ENCODE measurements at regions of chr20 and their contacts with region 1.

Region 1: GRCh38 chr20:63537525-63538203 is 488 bp upstream of the PTK6 start:
- DNase-seq: peak; percentile 99
- H3K4me3 Mint-ChIP-seq: peak overlapping the region; percentile 66
- H3K27ac Mint-ChIP-seq: peak overlapping the region; percentile 80
- H3K4me1 Mint-ChIP-seq: peaks cover 15% of the 10 kb centered on the region
- H3K27me3 Mint-ChIP-seq: no peaks in the 10 kb centered on the region

Region 2: DNA sequence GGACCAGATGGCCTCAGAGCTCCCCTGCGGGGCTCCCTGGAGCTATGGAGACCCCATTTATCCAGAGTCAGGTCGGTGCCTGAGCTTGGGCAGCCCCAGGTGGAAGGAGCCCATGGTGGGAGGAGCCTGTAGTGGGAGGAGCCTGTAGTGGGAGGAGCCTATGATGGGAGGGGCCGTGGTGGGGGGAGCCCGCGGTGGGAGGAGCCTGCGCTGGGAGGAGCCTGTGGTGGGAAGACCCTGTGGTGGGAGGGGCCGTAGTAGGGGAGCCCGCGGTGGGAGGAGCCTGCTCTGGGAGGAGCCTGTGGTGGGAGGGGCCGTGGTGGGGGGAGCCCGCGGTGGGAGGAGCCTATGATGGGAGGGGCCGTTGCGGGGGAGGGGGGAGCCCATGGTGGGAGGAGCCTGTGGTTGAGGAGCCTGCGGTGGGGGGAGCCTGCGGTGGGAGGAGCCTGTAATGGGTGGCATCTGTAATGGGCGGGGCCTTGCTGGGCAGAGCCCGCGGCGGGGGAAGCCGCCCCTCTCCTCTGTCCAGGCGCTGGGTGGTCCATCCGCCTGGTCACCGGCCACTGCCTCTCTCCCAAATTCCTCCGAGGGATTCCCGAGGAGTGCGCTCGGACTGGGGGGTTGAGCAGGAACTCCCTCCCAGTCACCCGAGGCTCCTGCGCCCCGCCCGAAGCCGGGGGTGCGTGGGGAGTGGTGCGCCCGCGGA is 15.7 kb after region 1 on chr20:
- CTCF ChIA-PET with region 1: interaction called, 10 read pairs
- POLR2A ChIA-PET with region 1: no interaction called
- intact Hi-C with region 1: loop called (anchors 1 kb)
- DNase-seq: peak; percentile 94
- H3K4me3 Mint-ChIP-seq: peak overlapping the region; percentile 39
- H3K27ac Mint-ChIP-seq: no peak overlapping the region
- H3K4me1 Mint-ChIP-seq: peaks cover 11% of the 10 kb centered on the region
- H3K27me3 Mint-ChIP-seq: peaks cover 6% of the 10 kb centered on the region

Region 3: DNA sequence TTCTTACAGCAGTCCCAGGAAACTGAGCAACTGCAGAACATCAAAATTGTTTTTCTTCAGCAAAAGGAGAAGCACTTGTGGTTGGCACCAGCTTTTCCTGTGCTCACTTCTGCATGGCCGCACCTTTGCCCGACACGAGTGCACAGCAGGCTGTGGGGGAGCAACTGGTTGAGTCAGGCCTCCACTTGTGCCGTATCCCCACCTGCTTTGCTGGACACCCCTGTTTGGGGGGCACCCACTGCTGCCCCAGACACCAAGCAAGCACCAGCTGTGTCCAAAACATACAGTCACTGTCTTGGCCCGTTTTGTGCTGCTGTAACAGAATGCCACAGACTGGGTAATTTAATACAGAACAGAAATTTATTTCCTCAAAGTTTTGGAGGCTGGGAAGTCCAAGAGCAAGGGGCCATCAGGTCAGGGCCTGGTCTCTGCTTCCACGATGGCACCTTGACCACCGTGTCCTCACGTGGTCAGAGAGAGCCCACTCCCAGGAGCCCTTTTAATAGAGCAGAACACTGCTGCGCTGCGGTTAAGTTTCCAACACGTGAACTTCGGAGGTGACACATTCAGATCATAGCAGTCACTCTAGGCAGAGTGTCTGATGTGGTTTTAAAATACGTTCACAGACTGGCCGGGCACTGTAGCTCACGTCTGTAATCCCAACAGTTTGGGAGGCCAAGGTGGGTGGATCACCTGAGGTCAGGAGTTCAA is 97.9 kb after region 1 on chr20:
- CTCF ChIA-PET with region 1: interaction called, 6 read pairs
- POLR2A ChIA-PET with region 1: interaction called, 3 read pairs
- intact Hi-C with region 1: loop called (anchors 5 kb)
- DNase-seq: peak; percentile 90
- H3K4me3 Mint-ChIP-seq: peak overlapping the region; percentile 60
- H3K27ac Mint-ChIP-seq: peak overlapping the region; percentile 93
- H3K4me1 Mint-ChIP-seq: peaks cover 55% of the 10 kb centered on the region
- H3K27me3 Mint-ChIP-seq: no peaks in the 10 kb centered on the region

Region 4: GRCh38 chr20:63707549-63708300 is 170.1 kb after region 1 on chr20 and contains the starts of genes ARFRP1 and ZGPAT:
- CTCF ChIA-PET with region 1: interaction called, 13 read pairs
- POLR2A ChIA-PET with region 1: no interaction called
- intact Hi-C with region 1: no loop called
- DNase-seq: peak; percentile 93
- H3K4me3 Mint-ChIP-seq: peak within 1 kb of the TSS; percentile 93
- H3K27ac Mint-ChIP-seq: peak within 1 kb of the TSS; percentile 94
- H3K4me1 Mint-ChIP-seq: peaks cover 44% of the 10 kb centered on the region
- H3K27me3 Mint-ChIP-seq: no peaks in the 10 kb centered on the region
- total RNA-seq, gene ARFRP1: 54.6 to 58.4 TPM
- total RNA-seq, gene ZGPAT: 28.7 to 29.9 TPM

Region 5: GRCh38 chr20:63864847-63865640 is 327.4 kb after region 1 on chr20 and contains the start of gene TPD52L2:
- CTCF ChIA-PET with region 1: interaction called, 19 read pairs
- POLR2A ChIA-PET with region 1: interaction called, 8 read pairs
- intact Hi-C with region 1: loop called (anchors 1 kb)
- DNase-seq: peak; percentile 99
- H3K4me3 Mint-ChIP-seq: peak within 1 kb of the TSS; percentile 78
- H3K27ac Mint-ChIP-seq: peak within 1 kb of the TSS; percentile 87
- H3K4me1 Mint-ChIP-seq: peaks cover 32% of the 10 kb centered on the region
- H3K27me3 Mint-ChIP-seq: no peaks in the 10 kb centered on the region
- total RNA-seq, gene TPD52L2: 67.8 to 70.8 TPM

Region 6: DNA sequence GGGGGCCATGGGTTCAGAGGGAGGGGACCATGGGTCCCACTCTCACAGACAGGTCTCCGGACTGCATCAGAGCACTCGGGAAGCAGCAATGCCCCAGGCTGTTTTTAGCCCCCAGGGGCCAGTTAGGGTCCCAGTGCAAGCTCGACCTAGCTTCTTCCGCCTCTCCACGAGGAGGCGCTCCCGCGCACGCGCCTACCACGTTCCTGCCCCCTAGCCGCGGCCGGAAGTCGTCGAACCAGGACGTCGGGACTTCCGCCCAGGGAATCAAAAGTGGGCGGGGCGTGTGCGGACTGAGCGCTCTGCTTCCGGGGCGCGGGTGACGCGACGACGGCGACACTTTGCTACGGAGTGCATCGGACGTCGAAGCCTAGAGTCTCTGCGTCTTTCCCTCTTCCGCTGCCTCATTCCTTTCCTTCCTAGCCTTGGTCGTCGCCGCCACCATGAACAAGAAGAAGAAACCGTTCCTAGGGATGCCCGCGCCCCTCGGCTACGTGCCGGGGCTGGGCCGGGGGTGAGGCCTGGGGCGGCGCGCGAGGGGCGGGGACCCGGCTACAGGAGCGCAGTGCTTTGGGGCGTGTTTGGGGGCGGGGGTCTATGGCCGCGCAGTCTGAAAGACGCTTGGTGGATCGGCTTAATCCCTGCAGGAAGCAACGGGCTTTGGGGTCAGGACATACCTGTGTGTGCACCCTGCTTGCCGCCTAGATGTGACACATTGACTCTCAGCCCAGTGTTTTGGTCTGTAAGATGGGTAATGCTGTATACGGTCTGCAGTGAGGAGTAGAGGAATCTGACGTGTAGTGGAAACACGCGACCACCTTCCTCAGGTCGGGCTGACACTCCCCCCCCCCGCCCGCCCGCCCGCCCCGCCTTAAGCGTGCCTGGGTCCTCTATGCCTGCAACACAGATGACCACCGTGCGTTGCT is 443.4 kb after region 1 on chr20 and contains the start of gene PRPF6:
- CTCF ChIA-PET with region 1: interaction called, 11 read pairs
- POLR2A ChIA-PET with region 1: no interaction called
- intact Hi-C with region 1: loop called (anchors 5 kb)
- DNase-seq: peak; percentile 97
- H3K4me3 Mint-ChIP-seq: peak within 1 kb of the TSS; percentile 84
- H3K27ac Mint-ChIP-seq: peak within 1 kb of the TSS; percentile 96
- H3K4me1 Mint-ChIP-seq: peaks cover 60% of the 10 kb centered on the region
- H3K27me3 Mint-ChIP-seq: no peaks in the 10 kb centered on the region
- total RNA-seq, gene PRPF6: 62.3 to 63.1 TPM

Region 7: DNA sequence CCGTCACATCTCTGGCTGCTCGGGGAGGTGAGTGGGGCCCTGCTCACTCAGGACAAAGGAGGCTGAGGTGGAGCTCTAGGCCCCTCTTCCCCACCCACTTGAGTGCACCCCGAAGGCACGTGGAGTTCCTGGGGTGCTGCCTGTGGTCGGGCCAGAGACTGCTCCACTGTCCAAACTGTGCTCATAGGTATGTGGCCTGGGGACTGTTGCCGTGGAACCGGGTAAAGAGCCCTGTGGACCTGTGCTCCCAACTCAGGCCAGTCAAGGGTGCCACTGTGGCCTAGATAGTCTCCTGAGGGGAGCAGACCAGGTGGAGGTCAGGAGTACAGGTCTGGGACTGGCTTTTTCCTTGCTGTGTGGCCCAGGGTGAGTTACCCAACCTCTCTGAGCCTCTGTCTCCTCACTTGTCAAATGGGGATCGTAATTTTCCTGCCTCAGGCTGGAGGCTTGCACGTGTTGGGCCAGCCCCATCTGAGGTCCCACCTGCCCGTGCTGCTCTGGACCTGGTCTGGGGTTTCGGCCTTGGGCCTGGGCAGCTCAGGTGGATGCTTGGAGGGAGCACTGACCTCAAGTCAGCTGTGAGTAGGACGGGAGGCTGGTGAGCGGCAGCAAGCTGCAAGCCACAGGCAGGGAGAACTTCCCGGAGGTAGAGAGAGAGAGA is 582.1 kb after region 1 on chr20:
- CTCF ChIA-PET with region 1: interaction called, 10 read pairs
- POLR2A ChIA-PET with region 1: no interaction called
- intact Hi-C with region 1: no loop called
- DNase-seq: no peak
- H3K4me3 Mint-ChIP-seq: peak overlapping the region; percentile 35
- H3K27ac Mint-ChIP-seq: no peak overlapping the region
- H3K4me1 Mint-ChIP-seq: peaks cover 8% of the 10 kb centered on the region
- H3K27me3 Mint-ChIP-seq: peaks cover 8% of the 10 kb centered on the region